ENCODE measurements at regions of chr1 and their contacts with region 1.

Region 1: GRCh38 chr1:201114236-201115131 is 2.3 kb upstream of the CACNA1S start:
- DNase-seq: peak; percentile 89
- H3K4me3 Mint-ChIP-seq: peak overlapping the region; percentile 81
- H3K27ac Mint-ChIP-seq: no peak overlapping the region
- H3K4me1 Mint-ChIP-seq: peaks cover 2% of the 10 kb centered on the region
- H3K27me3 Mint-ChIP-seq: peaks cover 2% of the 10 kb centered on the region

Region 2: GRCh38 chr1:200558866-200559459 is 555.5 kb before region 1 on chr1:
- CTCF ChIA-PET with region 1: no interaction called
- intact Hi-C with region 1: loop called (anchors 2 kb)
- DNase-seq: peak; percentile 44
- H3K4me3 Mint-ChIP-seq: no peak overlapping the region
- H3K27ac Mint-ChIP-seq: no peak overlapping the region
- H3K4me1 Mint-ChIP-seq: peaks cover 11% of the 10 kb centered on the region
- H3K27me3 Mint-ChIP-seq: no peaks in the 10 kb centered on the region

Region 3: GRCh38 chr1:200971955-200972711 is 142.4 kb before region 1 on chr1:
- CTCF ChIA-PET with region 1: interaction called, 20 read pairs
- intact Hi-C with region 1: loop called (anchors 1 kb)
- DNase-seq: peak; percentile 76
- H3K4me3 Mint-ChIP-seq: no peak overlapping the region
- H3K27ac Mint-ChIP-seq: no peak overlapping the region
- H3K4me1 Mint-ChIP-seq: peaks cover 4% of the 10 kb centered on the region
- H3K27me3 Mint-ChIP-seq: no peaks in the 10 kb centered on the region

Region 4: DNA sequence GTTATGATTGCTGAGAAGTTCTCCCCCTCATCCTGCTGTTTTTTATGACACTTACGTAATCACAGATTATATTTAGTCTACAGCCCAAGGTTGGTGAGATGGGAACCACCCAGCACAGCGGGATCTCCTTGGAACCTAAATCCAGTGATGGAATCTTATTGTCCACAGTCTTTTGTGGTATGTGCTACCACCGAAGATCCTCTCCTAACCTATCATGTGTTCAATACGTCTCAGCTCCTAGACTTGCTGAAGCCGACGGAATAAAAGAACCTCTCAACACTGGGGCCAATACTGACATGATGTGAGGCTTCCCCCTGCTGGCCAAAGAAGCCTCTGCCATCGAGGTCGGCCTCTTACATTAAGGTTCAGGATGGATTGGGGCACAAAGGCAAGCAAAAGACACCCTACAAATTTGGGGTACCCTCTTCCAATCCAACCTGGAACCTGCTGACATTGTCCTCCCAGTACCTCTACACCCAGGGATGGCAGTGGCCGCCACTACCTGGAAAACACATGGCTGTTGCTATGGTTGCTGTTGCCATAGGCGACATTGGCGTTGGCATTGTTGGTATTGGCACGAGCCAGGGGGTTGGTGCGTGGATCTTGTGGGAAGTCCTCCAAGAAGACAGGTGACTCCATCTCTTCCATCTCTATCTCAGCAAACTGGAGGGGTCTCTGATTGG is 71.6 kb before region 1 on chr1:
- CTCF ChIA-PET with region 1: interaction called, 4 read pairs
- intact Hi-C with region 1: loop called (anchors 1 kb)
- DNase-seq: peak; percentile 83
- H3K4me3 Mint-ChIP-seq: no peak overlapping the region
- H3K27ac Mint-ChIP-seq: no peak overlapping the region
- H3K4me1 Mint-ChIP-seq: no peaks in the 10 kb centered on the region
- H3K27me3 Mint-ChIP-seq: no peaks in the 10 kb centered on the region

Region 5: DNA sequence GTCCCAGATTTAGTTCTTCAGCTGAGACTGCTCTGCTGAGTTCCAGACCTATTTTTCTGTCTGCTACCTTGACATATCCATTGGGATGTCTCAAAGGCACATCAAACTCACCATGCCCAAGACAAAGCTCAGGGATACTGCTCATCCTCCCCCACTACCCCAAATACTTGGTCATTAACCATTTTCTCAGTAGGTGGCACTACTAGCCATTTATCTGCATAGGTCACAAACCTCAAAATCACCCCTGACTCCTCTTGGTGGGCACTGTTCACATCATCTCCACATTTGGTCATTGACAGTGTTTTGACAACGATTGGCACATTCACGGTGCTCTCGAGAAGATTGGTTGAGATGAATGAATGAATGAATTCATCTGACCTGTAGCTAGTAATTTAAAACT is 34.3 kb before region 1 on chr1:
- CTCF ChIA-PET with region 1: interaction called, 13 read pairs
- intact Hi-C with region 1: no loop called
- DNase-seq: no peak
- H3K4me3 Mint-ChIP-seq: no peak overlapping the region
- H3K27ac Mint-ChIP-seq: no peak overlapping the region
- H3K4me1 Mint-ChIP-seq: no peaks in the 10 kb centered on the region
- H3K27me3 Mint-ChIP-seq: no peaks in the 10 kb centered on the region